CD4-positive, alpha-beta memory T cell (primary cell): ENCODE measurements at regions of chr1 and their contacts with region 1.

Region 1: DNA sequence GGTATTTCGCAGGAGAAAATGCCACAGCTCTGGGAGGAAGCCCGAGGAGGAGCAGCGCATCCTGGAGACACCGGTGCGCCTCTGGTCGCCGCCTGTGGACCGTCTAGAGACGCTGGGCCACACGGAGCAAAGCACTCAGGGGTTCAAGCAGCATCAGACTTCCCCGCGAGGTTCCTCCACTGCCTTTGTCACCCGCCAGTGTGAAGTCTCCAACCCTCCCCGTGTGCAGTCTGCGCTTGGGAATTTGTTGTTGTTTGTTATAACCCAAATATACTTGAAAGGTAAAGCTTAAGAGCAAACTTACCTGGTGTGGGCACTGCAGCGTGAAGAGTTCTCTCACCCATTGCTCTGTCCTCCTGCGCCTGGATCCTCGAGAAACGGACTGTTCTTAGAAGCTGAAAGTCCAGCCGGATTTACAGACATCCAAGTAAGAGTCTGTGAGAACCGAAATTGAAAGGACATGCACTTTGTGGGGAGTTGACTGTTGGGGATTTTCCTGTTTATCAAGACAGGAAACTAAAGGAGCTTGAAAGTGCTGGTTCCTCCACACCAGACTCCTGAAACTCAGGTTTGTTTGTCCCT is at the start of gene GBP4:
- DNase-seq: peak; percentile 36 to 58 (median 45)
- H3K4me3 ChIP-seq: peak within 1 kb of the TSS; percentile 80
- H3K4me3 Mint-ChIP-seq: peak within 1 kb of the TSS; percentile 96 to 99 (median 98)
- H3K27ac ChIP-seq: peak within 1 kb of the TSS; percentile 85
- H3K27ac Mint-ChIP-seq: peak within 1 kb of the TSS; percentile 94 to 99 (median 95)
- H3K4me1 ChIP-seq: peaks cover 60% of the 10 kb centered on the region
- H3K4me1 Mint-ChIP-seq: peaks cover 48 to 88% (median 63%) of the 10 kb centered on the region in 4 donors
- H3K27me3 ChIP-seq: no peaks in the 10 kb centered on the region
- H3K27me3 Mint-ChIP-seq: no peaks in the 10 kb centered on the region
- total RNA-seq, gene GBP4: 48.5 to 49.5 TPM

Region 2: DNA sequence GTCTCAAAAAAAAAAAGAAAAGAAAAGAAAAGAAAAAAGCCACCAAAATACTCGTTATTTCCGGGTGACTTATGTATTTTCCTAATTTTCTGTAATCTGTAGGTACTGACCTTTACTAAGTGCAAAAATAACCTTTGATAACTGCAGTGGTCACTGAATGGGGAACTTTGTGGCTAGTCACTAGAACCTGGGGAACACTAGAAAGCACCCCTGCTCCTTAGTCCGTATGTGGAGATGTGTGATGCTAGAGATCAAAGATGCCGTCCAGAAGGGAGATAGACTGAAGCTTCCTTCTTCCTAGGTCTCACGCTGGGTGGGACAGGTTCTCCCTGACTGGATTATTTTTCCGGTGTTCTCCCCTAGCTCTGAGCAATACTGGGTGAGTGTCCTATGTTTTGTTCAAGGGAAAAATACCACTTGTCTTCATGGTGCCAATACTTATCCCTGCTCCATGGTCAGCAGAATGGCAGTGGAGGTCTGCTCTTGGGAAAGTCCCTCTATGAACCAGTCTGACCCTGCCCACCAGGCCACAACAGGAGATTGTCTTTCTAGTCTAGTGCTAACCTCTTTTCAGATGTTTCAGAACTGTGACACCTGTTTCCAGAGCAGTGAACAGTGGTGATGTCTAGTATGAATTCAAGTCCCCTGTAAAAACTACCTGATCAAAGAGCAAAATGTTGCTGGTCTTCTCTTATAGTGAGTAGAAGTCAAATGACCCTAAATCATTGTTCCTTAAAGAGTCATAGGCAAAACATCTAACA is 347.1 kb before region 1 on chr1:
- CTCF ChIA-PET with region 1: no interaction called
- POLR2A ChIA-PET with region 1: no interaction called
- intact Hi-C with region 1: no loop called
- DNase-seq: no peak
- H3K4me3 ChIP-seq: no peak overlapping the region
- H3K4me3 Mint-ChIP-seq: no peak overlapping the region
- H3K27ac ChIP-seq: no peak overlapping the region
- H3K27ac Mint-ChIP-seq: peak overlapping the region in 5 of 7 donors; percentile 22 to 64 (median 37)
- H3K4me1 ChIP-seq: no peaks in the 10 kb centered on the region
- H3K4me1 Mint-ChIP-seq: peaks cover 0 to 4% (median under 1%) of the 10 kb centered on the region in 4 donors
- H3K27me3 ChIP-seq: no peaks in the 10 kb centered on the region
- H3K27me3 Mint-ChIP-seq: no peaks in the 10 kb centered on the region

Region 3: DNA sequence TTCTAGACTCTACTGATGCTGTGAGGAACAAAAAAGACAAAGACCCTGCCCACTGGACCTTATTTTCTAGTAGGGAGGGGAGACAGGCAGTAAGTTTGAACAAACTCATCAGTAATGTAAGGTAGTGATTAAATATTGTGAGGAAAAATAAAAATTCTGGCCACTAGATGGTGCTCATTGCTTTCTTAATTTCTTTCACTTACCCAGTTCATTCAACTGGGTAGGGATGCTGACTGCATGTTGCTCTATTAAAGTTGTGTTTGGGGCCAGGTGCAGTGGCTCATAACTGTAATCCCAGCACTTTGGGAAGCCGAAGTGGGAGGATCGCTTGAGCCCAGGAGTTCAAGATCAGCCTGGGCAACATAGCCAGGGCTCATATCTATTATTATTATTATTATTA is 199.9 kb before region 1 on chr1:
- CTCF ChIA-PET with region 1: interaction called, 8 read pairs
- POLR2A ChIA-PET with region 1: interaction called, 5 read pairs
- intact Hi-C with region 1: loop called (anchors 2 kb)
- DNase-seq: peak; percentile 51 to 74 (median 71)
- H3K4me3 ChIP-seq: no peak overlapping the region
- H3K4me3 Mint-ChIP-seq: no peak overlapping the region
- H3K27ac ChIP-seq: no peak overlapping the region
- H3K27ac Mint-ChIP-seq: no peak overlapping the region
- H3K4me1 ChIP-seq: peaks cover 25% of the 10 kb centered on the region
- H3K4me1 Mint-ChIP-seq: peaks cover 20 to 40% (median 30%) of the 10 kb centered on the region in 4 donors
- H3K27me3 ChIP-seq: no peaks in the 10 kb centered on the region
- H3K27me3 Mint-ChIP-seq: no peaks in the 10 kb centered on the region

Region 4: GRCh38 chr1:89065079-89065868 is 133.3 kb before region 1 on chr1 and contains the start of gene GBP1:
- CTCF ChIA-PET with region 1: interaction called, 5 read pairs
- POLR2A ChIA-PET with region 1: interaction called, 3 read pairs
- intact Hi-C with region 1: loop called (anchors 5 kb)
- DNase-seq: peak; percentile 51 to 57 (median 53)
- H3K4me3 ChIP-seq: peak within 1 kb of the TSS; percentile 65 to 74
- H3K4me3 Mint-ChIP-seq: peak within 1 kb of the TSS; percentile 90 to 100 (median 98)
- H3K27ac ChIP-seq: peak within 1 kb of the TSS; percentile 85
- H3K27ac Mint-ChIP-seq: peak within 1 kb of the TSS; percentile 94 to 100 (median 96)
- H3K4me1 ChIP-seq: peaks cover 56% of the 10 kb centered on the region
- H3K4me1 Mint-ChIP-seq: peaks cover 37 to 70% (median 51%) of the 10 kb centered on the region in 4 donors
- H3K27me3 ChIP-seq: no peaks in the 10 kb centered on the region
- H3K27me3 Mint-ChIP-seq: no peaks in the 10 kb centered on the region
- total RNA-seq, gene GBP1: 74.1 to 74.2 TPM

Region 5: DNA sequence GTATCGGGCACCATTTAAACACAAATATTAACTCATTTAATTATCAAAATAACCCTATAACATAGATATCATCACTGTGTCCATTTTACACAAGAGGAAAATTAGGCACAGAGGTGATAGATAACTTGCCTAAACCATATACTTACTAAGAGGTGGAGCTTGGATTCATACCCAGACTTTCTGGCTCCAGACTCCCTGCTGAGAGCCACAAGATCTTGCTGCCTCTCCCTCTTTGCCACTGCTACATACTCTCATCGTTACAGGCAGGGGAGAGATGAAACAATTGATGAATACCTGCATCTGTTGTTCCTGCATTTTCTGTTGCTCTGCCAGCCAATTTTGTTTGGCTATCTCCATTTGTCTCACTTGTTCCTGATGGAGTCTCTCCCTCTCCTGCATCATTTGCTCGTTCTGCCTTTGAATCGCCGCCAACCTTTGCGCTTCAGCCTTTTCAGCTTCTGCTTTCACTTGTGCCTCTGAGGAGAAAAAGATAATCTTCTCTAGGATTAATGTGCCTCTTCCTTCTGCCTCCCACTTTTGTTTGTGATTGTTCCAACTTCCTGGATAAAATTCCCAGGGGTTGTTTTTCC is 63.4 kb after region 1 on chr1:
- CTCF ChIA-PET with region 1: interaction called, 3 read pairs
- POLR2A ChIA-PET with region 1: interaction called, 23 read pairs
- intact Hi-C with region 1: loop called (anchors 5 kb)
- DNase-seq: no peak
- H3K4me3 ChIP-seq: peak overlapping the region in 1 of 2 donors; percentile 29
- H3K4me3 Mint-ChIP-seq: peak overlapping the region in 7 of 8 donors; percentile 32 to 74 (median 42)
- H3K27ac ChIP-seq: no peak overlapping the region
- H3K27ac Mint-ChIP-seq: peak overlapping the region; percentile 18 to 90 (median 75)
- H3K4me1 ChIP-seq: peaks cover 92% of the 10 kb centered on the region
- H3K4me1 Mint-ChIP-seq: peaks cover 58 to 75% (median 66%) of the 10 kb centered on the region in 4 donors
- H3K27me3 ChIP-seq: no peaks in the 10 kb centered on the region
- H3K27me3 Mint-ChIP-seq: no peaks in the 10 kb centered on the region

Region 6: DNA sequence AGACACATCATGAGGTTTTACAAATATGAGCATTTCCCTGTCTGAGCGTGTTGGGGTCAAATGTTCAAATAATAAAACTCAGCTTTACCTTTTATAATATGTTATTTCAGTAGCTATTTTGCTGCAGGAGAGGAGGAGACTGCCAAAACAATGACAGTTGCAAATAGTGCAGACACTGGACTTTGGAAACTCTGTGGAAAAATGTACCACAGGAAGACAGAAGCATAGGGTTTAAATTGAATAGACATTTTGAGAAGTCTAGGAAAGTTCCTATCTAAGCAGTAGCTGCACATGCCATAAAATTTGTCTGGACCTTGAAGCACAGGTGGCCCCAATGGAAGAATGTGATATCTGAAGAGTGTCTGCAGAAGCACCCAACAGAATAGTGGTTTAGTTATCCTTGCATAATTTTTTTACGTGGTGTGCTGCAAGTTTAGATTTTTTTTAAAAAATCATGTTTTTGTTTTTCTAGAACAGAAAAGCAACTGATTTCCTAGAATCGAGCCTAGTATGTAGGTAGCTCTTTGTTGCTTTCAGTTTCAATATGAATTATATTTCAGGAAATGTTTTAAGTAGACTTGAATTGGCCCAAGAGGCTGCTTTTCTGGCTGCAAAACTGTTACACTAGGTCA is 88.1 kb after region 1 on chr1:
- CTCF ChIA-PET with region 1: interaction called, 11 read pairs
- POLR2A ChIA-PET with region 1: interaction called, 21 read pairs
- intact Hi-C with region 1: no loop called
- DNase-seq: peak in 4 of 5 donors; percentile 39 to 58 (median 46)
- H3K4me3 ChIP-seq: peak overlapping the region; percentile 14 to 21
- H3K4me3 Mint-ChIP-seq: peak overlapping the region; percentile 45 to 78 (median 76)
- H3K27ac ChIP-seq: peak overlapping the region; percentile 61
- H3K27ac Mint-ChIP-seq: peak overlapping the region; percentile 83 to 96 (median 94)
- H3K4me1 ChIP-seq: peaks cover 67% of the 10 kb centered on the region
- H3K4me1 Mint-ChIP-seq: peaks cover 60 to 76% (median 69%) of the 10 kb centered on the region in 4 donors
- H3K27me3 ChIP-seq: no peaks in the 10 kb centered on the region
- H3K27me3 Mint-ChIP-seq: no peaks in the 10 kb centered on the region

Region 7: GRCh38 chr1:89538361-89538760 is 339.8 kb after region 1 on chr1:
- CTCF ChIA-PET with region 1: no interaction called
- POLR2A ChIA-PET with region 1: no interaction called
- intact Hi-C with region 1: no loop called
- DNase-seq: no peak
- H3K4me3 ChIP-seq: no peak overlapping the region
- H3K4me3 Mint-ChIP-seq: no peak overlapping the region
- H3K27ac ChIP-seq: no peak overlapping the region
- H3K27ac Mint-ChIP-seq: peak overlapping the region in 1 of 7 donors; percentile 26
- H3K4me1 ChIP-seq: peaks cover 24% of the 10 kb centered on the region
- H3K4me1 Mint-ChIP-seq: peaks cover 32 to 63% (median 48%) of the 10 kb centered on the region in 4 donors
- H3K27me3 ChIP-seq: no peaks in the 10 kb centered on the region
- H3K27me3 Mint-ChIP-seq: no peaks in the 10 kb centered on the region